ENCODE measurements at regions of chr6 and their contacts with region 1.

Region 1: GRCh38 chr6:87154993-87155841 is at the start of gene ZNF292:
- DNase-seq: peak; percentile 96
- ATAC-seq: peak; percentile 85
- H3K4me3 ChIP-seq: peak within 1 kb of the TSS; percentile 96
- H3K27ac ChIP-seq: peak within 1 kb of the TSS; percentile 92
- H3K4me1 ChIP-seq: peaks cover 3% of the 10 kb centered on the region; the same call in 1 of the 2 replicates
- H3K27me3 ChIP-seq: no peaks in the 10 kb centered on the region
- CTCF ChIP-seq: no peak; a peak in 2 of 6 replicates
- EP300 ChIP-seq: peak in 1 of 2 experiments; percentile 73; a peak in 2 of 4 replicates
- POLR2A ChIP-seq: peak; percentile 94
- RAD21 ChIP-seq: peak; percentile 25; the same call in 1 of the 2 replicates
- polyA plus RNA-seq, gene ZNF292: 11.1 to 20.9 TPM

Region 2: DNA sequence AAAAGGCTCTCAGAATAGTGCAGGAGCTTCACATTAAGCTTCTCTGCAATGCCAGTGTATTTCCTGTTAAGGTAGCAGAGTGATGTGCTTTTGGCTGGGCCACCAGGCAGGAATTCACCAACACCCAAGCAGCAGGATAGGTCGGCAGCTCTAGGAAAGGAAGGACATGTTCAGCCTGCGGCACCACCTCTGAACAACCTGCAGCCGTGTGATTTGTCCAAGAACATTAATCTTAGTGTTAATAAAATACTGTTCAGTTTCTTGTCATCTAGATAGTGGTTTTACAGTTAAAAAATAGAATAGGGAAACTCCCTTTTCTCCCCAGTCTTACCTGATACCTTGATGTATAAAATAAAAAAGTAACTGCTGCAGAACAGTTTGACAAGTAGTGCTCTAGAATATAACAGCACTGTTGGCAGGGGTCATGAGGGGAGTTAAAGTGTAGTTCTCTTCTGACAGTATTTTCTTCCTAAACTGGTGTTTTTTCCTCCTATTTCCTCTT is 18.9 kb after region 1 on chr6:
- CTCF ChIA-PET with region 1: interaction called, 6 read pairs
- POLR2A ChIA-PET with region 1: interaction called, 9 read pairs
- RAD21 ChIA-PET with region 1: interaction called, 12 read pairs
- SMC1A ChIA-PET with region 1: interaction called, 37 read pairs
- in situ Hi-C with region 1: no loop called
- intact Hi-C with region 1: no loop called
- DNase-seq: no peak
- ATAC-seq: peak; percentile 66
- H3K4me3 ChIP-seq: peak overlapping the region; percentile 27; the same call in 1 of the 2 replicates
- H3K27ac ChIP-seq: peak overlapping the region; percentile 38; the same call in 1 of the 2 replicates
- H3K4me1 ChIP-seq: peaks cover 23% of the 10 kb centered on the region
- H3K27me3 ChIP-seq: no peaks in the 10 kb centered on the region
- CTCF ChIP-seq: no peak
- EP300 ChIP-seq: no peak
- POLR2A ChIP-seq: no peak
- RAD21 ChIP-seq: no peak

Region 3: GRCh38 chr6:87237804-87238203 is 82.6 kb after region 1 on chr6:
- CTCF ChIA-PET with region 1: interaction called, 4 read pairs
- POLR2A ChIA-PET with region 1: interaction called, 7 read pairs
- RAD21 ChIA-PET with region 1: interaction called, 4 read pairs
- SMC1A ChIA-PET with region 1: interaction called, 6 read pairs
- in situ Hi-C with region 1: no loop called
- intact Hi-C with region 1: loop called (anchors 5 kb)
- DNase-seq: no peak
- ATAC-seq: peak; percentile 84
- H3K4me3 ChIP-seq: no peak overlapping the region
- H3K27ac ChIP-seq: no peak overlapping the region
- H3K4me1 ChIP-seq: no peaks in the 10 kb centered on the region
- H3K27me3 ChIP-seq: no peaks in the 10 kb centered on the region
- CTCF ChIP-seq: peak in 2 of 3 experiments; percentile 31 to 38; a peak in 4 of 6 replicates
- EP300 ChIP-seq: no peak
- POLR2A ChIP-seq: no peak
- RAD21 ChIP-seq: peak; percentile 27; the same call in 1 of the 2 replicates

Region 4: DNA sequence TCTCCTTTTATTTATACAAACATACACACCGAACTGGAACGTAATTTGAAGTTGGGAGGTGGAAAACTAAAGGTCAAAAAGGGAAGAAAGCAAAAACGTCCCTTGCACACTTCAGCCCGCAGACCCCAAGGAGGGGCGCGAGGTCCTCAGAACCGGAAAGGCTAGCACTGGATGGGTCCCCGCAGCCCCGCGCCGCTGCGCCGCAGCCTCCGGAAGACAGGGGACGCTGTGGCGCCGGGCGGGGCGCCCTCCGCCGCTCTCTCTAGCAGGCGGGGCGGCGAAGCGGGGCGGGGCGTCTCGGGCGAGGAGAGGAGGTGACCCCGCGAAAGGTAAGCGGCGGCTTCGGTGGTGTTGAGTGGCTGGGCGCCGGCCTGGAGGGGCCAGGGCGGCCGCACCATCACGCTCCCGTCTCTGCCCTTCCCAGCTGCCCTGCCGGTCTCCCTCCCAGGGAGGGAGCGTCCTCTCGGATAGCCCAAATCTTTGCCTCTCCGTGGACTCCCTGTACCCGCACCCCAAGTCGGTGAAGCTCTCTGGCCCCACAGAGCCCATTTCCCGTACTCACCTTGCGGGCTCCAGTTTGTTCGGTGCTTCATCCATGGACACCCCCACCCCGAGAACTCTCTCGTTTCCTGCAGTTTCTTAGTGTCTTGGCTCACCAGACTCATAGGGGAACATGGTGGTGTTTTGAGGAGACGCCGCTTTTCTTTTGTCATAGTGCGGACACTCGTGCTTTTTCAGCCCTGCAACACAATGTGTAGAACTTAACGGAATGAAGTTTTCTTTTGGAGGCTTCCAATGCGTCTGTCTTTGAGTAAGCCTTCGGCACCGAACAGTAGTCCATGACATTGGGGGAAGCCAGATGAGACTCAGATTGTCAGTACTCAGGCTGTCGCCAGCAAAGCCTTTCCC is 167.3 kb after region 1 on chr6 and contains the start of gene SMIM8:
- CTCF ChIA-PET with region 1: no interaction called
- POLR2A ChIA-PET with region 1: no interaction called
- RAD21 ChIA-PET with region 1: no interaction called
- SMC1A ChIA-PET with region 1: no interaction called
- in situ Hi-C with region 1: no loop called
- intact Hi-C with region 1: loop called (anchors 10 kb)
- DNase-seq: peak; percentile 24
- ATAC-seq: peak; percentile 99
- H3K4me3 ChIP-seq: peak within 1 kb of the TSS; percentile 96
- H3K27ac ChIP-seq: peak within 1 kb of the TSS; percentile 71
- H3K4me1 ChIP-seq: no peaks in the 10 kb centered on the region
- H3K27me3 ChIP-seq: no peaks in the 10 kb centered on the region
- CTCF ChIP-seq: peak; percentile 92 to 97 (median 97)
- EP300 ChIP-seq: no peak
- POLR2A ChIP-seq: peak; percentile 88
- RAD21 ChIP-seq: peak; percentile 34
- polyA plus RNA-seq, gene SMIM8: 33.9 to 45.8 TPM